ENCODE measurements at regions of chrX and their contacts with region 1.

Region 1: GRCh38 chrX:16931371-16931770 is 15.1 kb upstream of the REPS2 start:
- DNase-seq: no peak
- H3K4me3 ChIP-seq: no peak overlapping the region
- H3K27ac ChIP-seq: no peak overlapping the region
- H3K4me1 ChIP-seq: no peaks in the 10 kb centered on the region
- H3K27me3 ChIP-seq: no peaks in the 10 kb centered on the region
- CTCF ChIP-seq: no peak

Region 2: DNA sequence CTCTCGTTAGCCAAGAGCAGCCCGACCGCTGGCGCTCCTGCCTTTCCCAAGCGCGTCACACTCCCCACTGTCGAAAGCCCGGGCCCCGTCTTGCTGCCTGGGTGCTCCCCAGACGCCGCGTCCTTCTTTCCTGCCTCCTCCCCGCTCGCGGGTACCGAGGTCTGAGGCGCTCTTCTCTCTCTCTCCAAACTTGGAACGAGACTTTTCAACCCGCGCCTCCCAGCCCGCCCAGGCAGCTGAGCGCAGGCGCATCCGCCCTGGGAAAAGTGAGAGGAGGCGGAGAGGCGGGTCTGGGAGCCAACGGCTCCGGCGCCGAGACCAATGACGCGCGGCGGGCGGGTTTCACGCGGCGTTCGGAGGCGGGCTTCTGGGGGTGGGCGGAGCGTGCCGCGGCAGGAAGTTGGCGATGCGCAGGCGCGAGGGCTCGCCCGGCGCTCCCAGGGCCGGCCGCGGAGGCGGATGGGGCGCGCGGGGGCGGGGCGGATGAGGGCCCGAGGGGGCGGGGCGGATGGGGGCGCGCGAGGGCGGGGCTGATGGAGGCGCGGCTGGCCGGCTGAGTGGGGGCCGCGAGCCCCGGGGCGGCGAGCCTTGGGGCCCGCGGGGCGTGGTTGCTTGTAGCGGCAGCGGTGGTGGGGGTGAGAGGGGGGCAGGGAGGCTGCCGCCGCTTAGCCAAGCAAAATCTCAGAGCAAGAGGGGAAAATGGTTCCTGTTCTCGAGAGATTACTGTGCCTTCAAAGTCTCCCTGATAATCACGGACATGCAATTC is 61.1 kb before region 1 on chrX and contains the start of gene RBBP7:
- intact Hi-C with region 1: loop called (anchors 10 kb)
- DNase-seq: peak; percentile 94
- H3K4me3 ChIP-seq: peak within 1 kb of the TSS; percentile 54
- H3K27ac ChIP-seq: peak within 1 kb of the TSS; percentile 76
- H3K4me1 ChIP-seq: peaks cover 4% of the 10 kb centered on the region
- H3K27me3 ChIP-seq: no peaks in the 10 kb centered on the region
- CTCF ChIP-seq: no peak
- total RNA-seq, gene RBBP7: 89.3 to 112 TPM

Region 3: DNA sequence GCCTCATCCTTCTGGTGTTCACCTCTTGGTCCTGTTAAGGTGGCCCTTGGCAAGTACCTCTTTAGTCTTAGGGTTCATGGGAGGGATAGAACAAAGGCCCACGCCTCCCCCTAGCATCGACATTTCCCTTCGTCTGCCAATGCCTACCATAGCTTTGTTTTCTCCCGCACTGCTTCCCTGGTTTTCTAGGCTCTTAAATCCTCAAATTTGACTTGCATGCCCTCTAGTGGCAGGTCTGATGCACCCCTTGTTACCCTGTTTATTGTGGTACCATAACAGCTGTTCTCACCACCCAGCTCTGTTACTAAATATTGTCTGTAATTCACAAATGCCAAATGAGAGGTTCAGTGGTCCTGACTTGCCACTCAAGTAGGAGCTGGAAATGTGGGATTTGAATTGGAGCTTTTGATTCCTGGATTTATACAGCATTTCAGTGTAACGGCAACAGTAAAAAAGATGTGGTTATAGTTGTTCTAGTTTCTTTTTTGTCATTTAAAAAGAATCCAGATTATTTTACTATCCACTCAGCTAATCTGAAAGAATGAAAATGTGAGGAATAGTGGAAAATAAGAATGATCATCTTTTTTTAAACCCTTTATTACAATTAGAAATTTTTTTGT is 115.2 kb after region 1 on chrX:
- intact Hi-C with region 1: no loop called
- DNase-seq: peak; percentile 73
- H3K4me3 ChIP-seq: no peak overlapping the region
- H3K27ac ChIP-seq: no peak overlapping the region
- H3K4me1 ChIP-seq: no peaks in the 10 kb centered on the region
- H3K27me3 ChIP-seq: no peaks in the 10 kb centered on the region
- CTCF ChIP-seq: peak; percentile 67

Region 4: GRCh38 chrX:17067534-17067933 is 136.2 kb after region 1 on chrX:
- intact Hi-C with region 1: no loop called
- DNase-seq: no peak
- H3K4me3 ChIP-seq: no peak overlapping the region
- H3K27ac ChIP-seq: no peak overlapping the region
- H3K4me1 ChIP-seq: no peaks in the 10 kb centered on the region
- H3K27me3 ChIP-seq: no peaks in the 10 kb centered on the region
- CTCF ChIP-seq: no peak